CD4-positive, alpha-beta T cell (primary cell): ENCODE measurements at regions of chr3 and their contacts with region 1.

Region 1: DNA sequence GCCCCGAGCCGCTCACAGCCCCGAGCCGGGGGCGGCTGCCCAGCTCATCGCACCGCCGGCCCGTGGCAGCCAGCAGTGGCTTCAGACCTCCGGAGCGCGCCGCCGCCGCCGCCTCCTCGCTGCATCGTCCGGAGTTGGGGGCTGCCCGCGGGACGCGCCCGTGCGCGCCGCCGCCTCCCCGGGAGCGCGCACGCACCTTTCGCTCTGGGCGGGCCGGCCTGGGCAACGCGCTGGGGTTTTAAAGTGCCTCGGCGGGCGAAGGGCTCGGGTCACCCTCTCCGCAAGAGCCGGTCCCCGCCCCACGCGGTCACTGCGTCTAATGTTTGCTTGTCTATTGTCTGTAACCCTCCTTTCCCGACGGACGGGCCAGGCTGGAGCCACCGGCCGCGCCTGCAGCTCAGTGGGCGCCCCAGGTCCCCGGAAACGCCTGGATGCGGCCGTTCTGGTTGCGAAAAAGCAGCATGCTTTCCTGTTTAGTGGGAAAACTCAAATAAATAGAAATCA is at the start of gene RYK:
- DNase-seq: peak; percentile 38 to 90 (median 67)
- ATAC-seq: peak; percentile 63
- H3K4me3 ChIP-seq: peak within 1 kb of the TSS; percentile 87
- H3K4me3 Mint-ChIP-seq: peak within 1 kb of the TSS; percentile 98
- H3K27ac ChIP-seq: peak within 1 kb of the TSS; percentile 58 to 77
- H3K27ac Mint-ChIP-seq: peak within 1 kb of the TSS; percentile 96
- H3K4me1 ChIP-seq: peaks cover 15% of the 10 kb centered on the region
- H3K4me1 Mint-ChIP-seq: peaks cover 61% of the 10 kb centered on the region
- H3K27me3 ChIP-seq: no peaks in the 10 kb centered on the region
- H3K27me3 Mint-ChIP-seq: no peaks in the 10 kb centered on the region
- CTCF ChIP-seq: no peak
- total RNA-seq, gene RYK: 57.6 to 59.2 TPM

Region 2: GRCh38 chr3:133805527-133806475 is 445.0 kb before region 1 on chr3 and contains the start of gene SRPRB:
- CTCF ChIA-PET with region 1: no interaction called
- POLR2A ChIA-PET with region 1: no interaction called
- intact Hi-C with region 1: loop called in 1 of 2 experiments (anchors 10 kb)
- DNase-seq: peak; percentile 90 to 99 (median 94)
- ATAC-seq: peak; percentile 95
- H3K4me3 ChIP-seq: peak within 1 kb of the TSS; percentile 92
- H3K4me3 Mint-ChIP-seq: peak within 1 kb of the TSS; percentile 97
- H3K27ac ChIP-seq: peak within 1 kb of the TSS; percentile 70 to 75
- H3K27ac Mint-ChIP-seq: peak within 1 kb of the TSS; percentile 94
- H3K4me1 ChIP-seq: peaks cover 16% of the 10 kb centered on the region
- H3K4me1 Mint-ChIP-seq: peaks cover 40% of the 10 kb centered on the region
- H3K27me3 ChIP-seq: no peaks in the 10 kb centered on the region
- H3K27me3 Mint-ChIP-seq: no peaks in the 10 kb centered on the region
- CTCF ChIP-seq: no peak
- total RNA-seq, gene SRPRB: 19.1 to 19.9 TPM

Region 3: GRCh38 chr3:134299185-134299887 is 48.6 kb after region 1 on chr3:
- CTCF ChIA-PET with region 1: no interaction called
- POLR2A ChIA-PET with region 1: interaction called, 3 read pairs
- intact Hi-C with region 1: loop called (anchors 5 kb)
- DNase-seq: peak in 1 of 14 experiments; percentile 11
- ATAC-seq: no peak
- H3K4me3 ChIP-seq: no peak overlapping the region
- H3K4me3 Mint-ChIP-seq: no peak overlapping the region
- H3K27ac ChIP-seq: no peak overlapping the region
- H3K27ac Mint-ChIP-seq: no peak overlapping the region
- H3K4me1 ChIP-seq: peaks cover 5% of the 10 kb centered on the region
- H3K4me1 Mint-ChIP-seq: no peaks in the 10 kb centered on the region
- H3K27me3 ChIP-seq: no peaks in the 10 kb centered on the region
- H3K27me3 Mint-ChIP-seq: peaks cover 13% of the 10 kb centered on the region
- CTCF ChIP-seq: no peak

Region 4: DNA sequence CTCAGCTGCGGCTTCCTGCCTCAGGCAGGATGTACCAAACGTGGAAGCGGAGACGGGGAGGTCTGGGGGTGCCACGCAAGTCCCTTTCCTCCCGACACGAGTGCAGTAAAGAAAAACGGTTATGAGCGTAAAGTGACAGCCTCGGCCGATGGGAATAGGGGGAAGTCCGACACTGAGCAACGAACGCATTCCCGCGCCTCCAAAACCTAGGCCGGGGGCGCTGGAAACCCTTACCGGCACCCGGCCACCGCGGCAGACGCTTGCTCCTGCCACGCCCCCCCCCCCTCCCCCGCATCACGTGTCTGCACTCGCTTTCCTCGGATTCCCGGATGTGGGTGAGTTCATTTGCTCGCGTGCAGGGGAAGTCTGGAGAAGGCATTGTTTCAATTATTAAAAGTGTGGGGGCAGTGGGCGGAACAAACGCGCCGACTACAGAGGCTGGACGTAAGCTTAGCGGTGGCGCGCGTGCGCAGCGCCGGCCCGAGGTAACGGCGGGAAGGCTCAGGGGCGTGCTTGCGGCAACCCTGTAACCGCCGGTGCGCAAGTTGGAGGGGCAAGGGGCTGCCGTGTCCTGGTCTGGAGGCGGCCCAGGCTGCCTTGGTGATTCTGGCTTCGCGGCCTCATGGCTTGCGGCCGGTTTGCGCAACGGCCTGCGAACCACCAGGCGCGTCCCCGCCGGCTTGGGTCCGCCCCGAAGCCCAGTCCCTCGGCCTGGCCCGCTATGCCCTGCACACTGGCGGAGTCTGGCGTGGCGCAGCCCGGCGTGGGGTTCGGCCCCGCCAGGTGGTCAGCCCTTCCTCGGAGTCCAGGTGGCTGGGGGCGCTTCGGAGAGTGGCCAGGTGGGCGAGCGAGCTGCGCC is 235.2 kb after region 1 on chr3 and contains the starts of genes ANAPC13 and CEP63:
- CTCF ChIA-PET with region 1: no interaction called
- POLR2A ChIA-PET with region 1: interaction called, 22 read pairs
- intact Hi-C with region 1: loop called (anchors 2 kb)
- DNase-seq: peak; percentile 84 to 99 (median 90)
- ATAC-seq: peak; percentile 76
- H3K4me3 ChIP-seq: peak within 1 kb of the TSS; percentile 96
- H3K4me3 Mint-ChIP-seq: peak within 1 kb of the TSS; percentile 100
- H3K27ac ChIP-seq: peak within 1 kb of the TSS; percentile 86 to 95
- H3K27ac Mint-ChIP-seq: peak within 1 kb of the TSS; percentile 98
- H3K4me1 ChIP-seq: peaks cover 29% of the 10 kb centered on the region
- H3K4me1 Mint-ChIP-seq: peaks cover 71% of the 10 kb centered on the region
- H3K27me3 ChIP-seq: no peaks in the 10 kb centered on the region
- H3K27me3 Mint-ChIP-seq: no peaks in the 10 kb centered on the region
- CTCF ChIP-seq: no peak
- total RNA-seq, gene ANAPC13: 12.9 to 16.8 TPM
- total RNA-seq, gene CEP63: 13.2 to 15.1 TPM